Heart right ventricle (tissue), 16 donors: ENCODE measurements at regions of chr21 and their contacts with region 1.

Region 1: GRCh38 chr21:38669176-38669575 is 136.6 kb upstream of the ETS2 start:
- DNase-seq: no peak
- ATAC-seq: peak in 2 of 8 donors; percentile 20 to 52
- H3K4me3 ChIP-seq: no peak overlapping the region
- H3K27ac ChIP-seq: no peak overlapping the region
- H3K4me1 ChIP-seq: peaks cover 0 to 10% (median 0%) of the 10 kb centered on the region in 9 donors
- H3K27me3 ChIP-seq: peaks cover 0 to 70% (median 0%) of the 10 kb centered on the region in 7 donors
- CTCF ChIP-seq: peak in 8 of 9 donors; percentile 24 to 60 (median 46)

Region 2: DNA sequence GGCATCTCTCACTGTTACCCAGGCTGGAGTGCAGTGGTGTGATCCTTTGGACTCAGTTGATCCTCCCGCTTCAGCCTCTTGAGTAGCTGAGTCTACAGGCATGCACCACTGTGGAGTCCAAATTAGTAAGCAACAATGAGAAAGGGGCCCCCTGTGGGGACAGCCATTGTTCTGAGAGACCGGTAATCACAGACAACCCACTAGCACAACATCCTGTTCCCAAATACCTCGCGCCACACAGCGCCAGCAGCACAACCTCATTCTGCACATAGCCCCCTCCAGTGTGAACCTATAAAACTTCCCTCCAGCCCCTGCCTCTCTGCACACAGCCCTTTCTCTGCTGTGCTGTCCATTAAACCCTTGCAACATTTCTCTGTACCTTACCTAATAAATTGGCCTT is 1076.2 kb before region 1 on chr21:
- intact Hi-C with region 1: no loop called
- DNase-seq: no peak
- ATAC-seq: peak in 7 of 8 donors; percentile 42 to 84 (median 61)
- H3K4me3 ChIP-seq: no peak overlapping the region
- H3K27ac ChIP-seq: peak overlapping the region in 5 of 10 donors; percentile 38 to 64 (median 48)
- H3K4me1 ChIP-seq: peaks cover 0 to 20% (median 9%) of the 10 kb centered on the region in 9 donors
- H3K27me3 ChIP-seq: no peaks in the 10 kb centered on the region
- CTCF ChIP-seq: no peak

Region 3: DNA sequence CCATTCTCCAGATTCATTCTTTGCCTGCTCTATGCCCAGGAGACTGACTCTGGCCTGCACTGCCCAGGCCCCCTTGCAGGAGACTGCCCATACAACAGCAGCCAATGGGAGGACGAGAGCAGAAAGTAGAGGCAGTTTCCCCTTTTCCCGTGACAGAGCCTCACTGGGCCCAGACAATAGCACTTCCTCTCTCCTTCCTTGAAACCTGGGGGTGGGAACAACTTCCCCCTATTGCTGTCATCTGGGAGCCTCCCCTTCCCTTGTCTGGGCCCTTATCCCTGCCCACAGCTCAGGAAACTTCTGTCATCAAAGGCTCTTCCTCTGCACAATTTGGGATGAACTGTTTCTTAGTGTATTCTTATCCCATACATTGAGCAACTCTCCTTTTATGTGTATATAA is 473.1 kb before region 1 on chr21:
- intact Hi-C with region 1: no loop called
- DNase-seq: no peak
- ATAC-seq: peak in 6 of 8 donors; percentile 9 to 74 (median 48)
- H3K4me3 ChIP-seq: no peak overlapping the region
- H3K27ac ChIP-seq: peak overlapping the region in 1 of 10 donors; percentile 10
- H3K4me1 ChIP-seq: no peaks in the 10 kb centered on the region
- H3K27me3 ChIP-seq: no peaks in the 10 kb centered on the region
- CTCF ChIP-seq: no peak

Region 4: DNA sequence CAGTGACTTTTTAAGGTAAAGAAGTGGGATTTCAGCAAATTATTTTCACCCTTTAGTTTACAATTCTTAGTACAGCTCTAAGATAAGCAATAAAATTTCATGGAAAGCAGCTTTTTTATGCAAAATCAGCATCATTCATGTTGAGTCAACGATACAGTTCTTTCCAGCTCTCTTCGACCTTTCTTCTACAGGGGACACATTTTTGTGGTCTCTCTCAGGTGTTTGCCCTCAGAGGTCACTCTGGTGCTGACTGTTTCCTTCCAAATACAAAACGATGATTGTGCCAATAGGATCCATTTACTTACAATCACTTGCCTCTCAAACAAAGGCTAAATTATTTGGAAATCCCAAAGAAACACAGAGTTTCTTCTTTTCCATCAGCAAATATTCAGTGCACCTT is 463.1 kb after region 1 on chr21:
- intact Hi-C with region 1: loop called in 2 of 10 experiments (anchors 5 kb)
- DNase-seq: no peak
- ATAC-seq: no peak
- H3K4me3 ChIP-seq: no peak overlapping the region
- H3K27ac ChIP-seq: no peak overlapping the region
- H3K4me1 ChIP-seq: peaks cover 0 to 8% (median 0%) of the 10 kb centered on the region in 9 donors
- H3K27me3 ChIP-seq: no peaks in the 10 kb centered on the region
- CTCF ChIP-seq: no peak